PC-9 (cell line): ENCODE measurements at regions of chr18 and their contacts with region 1.

Region 1: GRCh38 chr18:3209859-3210569 is 9.8 kb downstream of the MYOM1 start:
- DNase-seq: peak in 1 of 2 experiments; percentile 58
- H3K4me3 ChIP-seq: no peak overlapping the region
- H3K27ac ChIP-seq: no peak overlapping the region
- H3K4me1 ChIP-seq: peaks cover 35% of the 10 kb centered on the region
- H3K27me3 ChIP-seq: no peaks in the 10 kb centered on the region
- CTCF ChIP-seq: no peak

Region 2: DNA sequence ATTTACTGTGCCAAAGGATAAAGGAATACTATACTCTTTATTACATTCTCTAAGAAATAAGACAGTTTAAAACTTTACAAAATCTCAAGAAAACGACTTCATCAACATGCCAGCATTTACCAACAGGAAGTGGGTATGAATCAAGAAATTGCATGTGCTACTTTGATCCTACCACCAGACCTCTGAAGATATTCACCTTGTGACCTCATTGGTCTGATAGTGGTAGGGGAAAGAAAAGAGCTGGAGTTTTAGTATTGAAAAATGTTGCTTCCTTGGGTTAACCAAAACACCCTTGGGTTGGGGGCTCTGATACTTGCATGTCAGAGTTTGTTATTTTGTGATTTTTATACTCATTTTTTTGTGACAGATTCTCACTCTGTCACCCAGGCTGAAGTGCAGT is 112.9 kb before region 1 on chr18:
- CTCF ChIA-PET with region 1: no interaction called
- POLR2A ChIA-PET with region 1: interaction called, 22 read pairs
- intact Hi-C with region 1: no loop called
- DNase-seq: no peak
- H3K4me3 ChIP-seq: no peak overlapping the region
- H3K27ac ChIP-seq: no peak overlapping the region
- H3K4me1 ChIP-seq: no peaks in the 10 kb centered on the region
- H3K27me3 ChIP-seq: no peaks in the 10 kb centered on the region
- CTCF ChIP-seq: no peak

Region 3: GRCh38 chr18:3223356-3223755 is 13.3 kb after region 1 on chr18:
- CTCF ChIA-PET with region 1: no interaction called
- POLR2A ChIA-PET with region 1: interaction called, 12 read pairs
- intact Hi-C with region 1: no loop called
- DNase-seq: no peak
- H3K4me3 ChIP-seq: no peak overlapping the region
- H3K27ac ChIP-seq: no peak overlapping the region
- H3K4me1 ChIP-seq: peaks cover 6% of the 10 kb centered on the region
- H3K27me3 ChIP-seq: no peaks in the 10 kb centered on the region
- CTCF ChIP-seq: no peak